ENCODE measurements at regions of chr20 and their contacts with region 1.

Region 1: DNA sequence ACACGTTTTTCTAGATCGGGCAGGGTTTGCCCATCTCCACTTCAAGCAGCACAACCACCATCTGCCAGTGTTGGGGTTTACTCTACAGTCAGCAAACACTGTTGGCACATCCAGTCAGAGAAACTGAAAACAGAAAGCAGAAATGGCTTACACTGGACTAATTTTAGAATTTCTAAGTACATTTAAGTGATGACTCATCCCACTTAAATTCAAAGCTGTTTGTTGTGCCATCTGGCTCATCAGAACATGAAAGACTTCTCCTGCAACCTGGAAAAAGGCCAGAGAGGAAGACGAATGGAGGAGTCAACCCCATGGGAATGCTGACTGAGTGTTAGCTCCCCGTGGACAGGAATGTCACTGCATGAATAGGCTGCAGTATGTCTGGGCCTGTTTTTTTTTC is 21.8 kb downstream of the FAM209B start:
- DNase-seq: peak; percentile 99
- H3K27ac ChIP-seq: no peak overlapping the region
- CTCF ChIP-seq: peak; percentile 47; the same call in 1 of the 2 replicates

Region 2: GRCh38 chr20:56566271-56566981 is 11.6 kb after region 1 on chr20:
- CTCF ChIA-PET with region 1: interaction called, 11 read pairs
- POLR2A ChIA-PET with region 1: no interaction called
- DNase-seq: no peak
- H3K27ac ChIP-seq: no peak overlapping the region
- CTCF ChIP-seq: no peak

Region 3: GRCh38 chr20:56587307-56588108 is 32.6 kb after region 1 on chr20:
- CTCF ChIA-PET with region 1: interaction called, 11 read pairs
- POLR2A ChIA-PET with region 1: interaction called, 5 read pairs
- DNase-seq: no peak
- H3K27ac ChIP-seq: no peak overlapping the region
- CTCF ChIP-seq: no peak

Region 4: GRCh38 chr20:56974499-56975236 is 419.8 kb after region 1 on chr20:
- CTCF ChIA-PET with region 1: interaction called, 22 read pairs
- POLR2A ChIA-PET with region 1: no interaction called
- DNase-seq: peak; percentile 74
- H3K27ac ChIP-seq: no peak overlapping the region
- CTCF ChIP-seq: peak; percentile 80

Region 5: GRCh38 chr20:57061058-57061900 is 506.4 kb after region 1 on chr20:
- CTCF ChIA-PET with region 1: interaction called, 16 read pairs
- POLR2A ChIA-PET with region 1: no interaction called
- DNase-seq: peak; percentile 79
- H3K27ac ChIP-seq: peak overlapping the region; percentile 69
- CTCF ChIP-seq: no peak; the same call in 1 of the 2 replicates